Activated naive CD4-positive, alpha-beta T cell treated with anti-CD3 and anti-CD28 coated beads for 36 hours (primary cell): ENCODE measurements at regions of chr3 and their contacts with region 1.

Region 1: GRCh38 chr3:134212906-134213665 is 37.6 kb downstream of the RYK start:
- DNase-seq: peak; percentile 95
- H3K4me3 Mint-ChIP-seq: no peak overlapping the region
- H3K27ac Mint-ChIP-seq: no peak overlapping the region
- H3K4me1 Mint-ChIP-seq: peaks cover 23% of the 10 kb centered on the region
- H3K27me3 Mint-ChIP-seq: no peaks in the 10 kb centered on the region

Region 2: GRCh38 chr3:133661454-133662277 is 551.4 kb before region 1 on chr3 and contains the start of gene TOPBP1:
- CTCF ChIA-PET with region 1: no interaction called
- intact Hi-C with region 1: loop called (anchors 5 kb)
- DNase-seq: peak; percentile 94
- H3K4me3 Mint-ChIP-seq: peak within 1 kb of the TSS; percentile 98
- H3K27ac Mint-ChIP-seq: peak within 1 kb of the TSS; percentile 98
- H3K4me1 Mint-ChIP-seq: peaks cover 28% of the 10 kb centered on the region
- H3K27me3 Mint-ChIP-seq: no peaks in the 10 kb centered on the region
- total RNA-seq, gene TOPBP1: 65.4 to 65.8 TPM

Region 3: DNA sequence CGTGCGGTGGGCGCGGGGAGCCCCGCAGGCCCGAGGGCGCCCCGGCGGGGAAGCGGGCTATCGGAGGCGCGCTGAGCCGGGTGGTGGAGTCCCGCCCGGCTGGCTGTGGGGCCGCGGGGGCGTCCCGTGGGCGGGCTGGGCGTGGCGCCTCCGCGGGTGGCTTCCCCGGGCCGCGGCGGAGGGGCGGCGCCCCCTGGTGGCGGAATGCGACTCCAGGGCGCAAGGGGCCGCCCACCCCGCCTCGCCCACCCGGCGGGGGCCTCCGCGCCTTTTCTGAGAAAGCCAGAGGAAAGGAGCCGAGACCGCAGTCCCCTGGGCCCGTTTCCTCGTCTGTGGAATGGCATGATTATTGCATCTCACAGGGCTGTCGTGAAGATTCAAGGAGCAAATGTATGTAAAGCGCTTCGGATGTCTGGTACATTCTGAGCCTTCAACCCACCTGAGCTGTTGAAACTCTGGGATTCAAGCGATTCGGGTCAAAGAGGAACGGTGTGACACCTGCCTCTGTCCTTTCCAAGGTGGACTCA is 285.5 kb before region 1 on chr3:
- CTCF ChIA-PET with region 1: no interaction called
- intact Hi-C with region 1: loop called (anchors 1 kb)
- DNase-seq: peak; percentile 60
- H3K4me3 Mint-ChIP-seq: no peak overlapping the region
- H3K27ac Mint-ChIP-seq: no peak overlapping the region
- H3K4me1 Mint-ChIP-seq: peaks cover 6% of the 10 kb centered on the region
- H3K27me3 Mint-ChIP-seq: peaks cover 2% of the 10 kb centered on the region

Region 4: DNA sequence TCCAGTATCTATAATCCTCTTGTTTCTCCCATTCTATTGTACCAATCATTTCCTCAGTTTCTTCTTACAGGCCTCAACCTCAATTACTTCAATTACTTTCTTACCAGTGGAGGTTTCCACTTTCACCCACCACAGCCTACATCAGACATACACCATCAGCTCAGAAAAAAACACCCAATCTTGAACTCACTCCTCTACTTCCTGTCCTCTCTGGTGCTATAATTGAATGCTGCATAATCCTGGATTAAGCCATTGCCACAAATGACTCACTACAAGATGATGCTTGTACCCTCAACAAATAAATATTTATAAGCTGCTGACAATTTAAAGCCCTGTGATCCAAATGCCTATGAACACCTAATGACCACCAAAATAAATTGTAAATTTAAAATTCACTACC is 19.1 kb after region 1 on chr3:
- CTCF ChIA-PET with region 1: interaction called, 68 read pairs
- intact Hi-C with region 1: no loop called
- DNase-seq: peak; percentile 26
- H3K4me3 Mint-ChIP-seq: no peak overlapping the region
- H3K27ac Mint-ChIP-seq: peak overlapping the region; percentile 11
- H3K4me1 Mint-ChIP-seq: peaks cover 77% of the 10 kb centered on the region
- H3K27me3 Mint-ChIP-seq: no peaks in the 10 kb centered on the region

Region 5: DNA sequence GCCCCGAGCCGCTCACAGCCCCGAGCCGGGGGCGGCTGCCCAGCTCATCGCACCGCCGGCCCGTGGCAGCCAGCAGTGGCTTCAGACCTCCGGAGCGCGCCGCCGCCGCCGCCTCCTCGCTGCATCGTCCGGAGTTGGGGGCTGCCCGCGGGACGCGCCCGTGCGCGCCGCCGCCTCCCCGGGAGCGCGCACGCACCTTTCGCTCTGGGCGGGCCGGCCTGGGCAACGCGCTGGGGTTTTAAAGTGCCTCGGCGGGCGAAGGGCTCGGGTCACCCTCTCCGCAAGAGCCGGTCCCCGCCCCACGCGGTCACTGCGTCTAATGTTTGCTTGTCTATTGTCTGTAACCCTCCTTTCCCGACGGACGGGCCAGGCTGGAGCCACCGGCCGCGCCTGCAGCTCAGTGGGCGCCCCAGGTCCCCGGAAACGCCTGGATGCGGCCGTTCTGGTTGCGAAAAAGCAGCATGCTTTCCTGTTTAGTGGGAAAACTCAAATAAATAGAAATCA is 37.7 kb after region 1 on chr3 and contains the start of gene RYK:
- CTCF ChIA-PET with region 1: interaction called, 9 read pairs
- intact Hi-C with region 1: loop called (anchors 1 kb)
- DNase-seq: peak; percentile 70
- H3K4me3 Mint-ChIP-seq: peak within 1 kb of the TSS; percentile 95
- H3K27ac Mint-ChIP-seq: peak within 1 kb of the TSS; percentile 90
- H3K4me1 Mint-ChIP-seq: peaks cover 57% of the 10 kb centered on the region
- H3K27me3 Mint-ChIP-seq: no peaks in the 10 kb centered on the region
- total RNA-seq, gene RYK: 19.5 to 19.7 TPM

Region 6: GRCh38 chr3:134308350-134308891 is 95.3 kb after region 1 on chr3:
- CTCF ChIA-PET with region 1: interaction called, 31 read pairs
- intact Hi-C with region 1: no loop called
- DNase-seq: peak; percentile 86
- H3K4me3 Mint-ChIP-seq: no peak overlapping the region
- H3K27ac Mint-ChIP-seq: no peak overlapping the region
- H3K4me1 Mint-ChIP-seq: peaks cover 2% of the 10 kb centered on the region
- H3K27me3 Mint-ChIP-seq: peaks cover 20% of the 10 kb centered on the region

Region 7: DNA sequence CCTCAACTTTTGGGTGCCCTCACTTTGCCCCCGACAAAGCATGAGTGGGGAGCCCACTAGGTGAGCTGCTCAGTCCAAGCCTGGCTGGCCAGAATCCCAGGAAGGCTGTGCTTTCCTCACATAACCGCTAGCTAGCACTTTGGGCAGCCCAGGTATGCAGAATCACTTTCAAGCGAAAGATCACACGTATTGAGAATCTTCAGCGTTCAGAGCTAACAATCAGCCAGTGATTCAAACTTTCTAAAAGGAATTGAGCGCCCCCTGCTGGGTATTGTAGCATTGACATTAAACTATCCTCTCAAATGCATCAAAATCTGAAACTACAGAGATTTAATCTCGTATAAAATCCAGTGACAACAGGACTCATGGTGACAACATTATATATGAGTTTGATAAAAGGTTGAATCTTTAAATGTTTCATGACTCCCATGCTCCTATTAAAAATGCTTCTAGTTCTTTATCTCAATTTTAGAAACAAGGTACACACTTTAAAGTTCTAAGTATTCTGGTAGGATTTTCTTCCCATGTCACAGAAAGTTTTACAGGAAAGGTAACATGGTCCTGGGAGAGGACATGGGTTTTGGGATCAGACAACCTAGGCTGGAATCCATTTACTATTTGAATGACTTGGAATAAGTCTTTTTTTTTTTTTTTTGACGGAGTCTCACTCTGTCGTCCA is 260.9 kb after region 1 on chr3:
- CTCF ChIA-PET with region 1: interaction called, 24 read pairs
- intact Hi-C with region 1: loop called (anchors 1 kb)
- DNase-seq: peak; percentile 91
- H3K4me3 Mint-ChIP-seq: no peak overlapping the region
- H3K27ac Mint-ChIP-seq: no peak overlapping the region
- H3K4me1 Mint-ChIP-seq: no peaks in the 10 kb centered on the region
- H3K27me3 Mint-ChIP-seq: no peaks in the 10 kb centered on the region